CD14-positive monocyte (primary cell): ENCODE measurements at regions of chr11 and their contacts with region 1.

Region 1: GRCh38 chr11:111777094-111778046 is 11.2 kb upstream of the PPP2R1B start:
- DNase-seq: peak; percentile 38 to 66 (median 60)
- H3K4me3 ChIP-seq: no peak overlapping the region
- H3K4me3 Mint-ChIP-seq: no peak overlapping the region
- H3K27ac ChIP-seq: no peak overlapping the region
- H3K27ac Mint-ChIP-seq: no peak overlapping the region
- H3K4me1 ChIP-seq: no peaks in the 10 kb centered on the region
- H3K4me1 Mint-ChIP-seq: no peaks in the 10 kb centered on the region
- H3K27me3 ChIP-seq: no peaks in the 10 kb centered on the region
- H3K27me3 Mint-ChIP-seq: no peaks in the 10 kb centered on the region
- CTCF ChIP-seq: peak; percentile 73

Region 2: GRCh38 chr11:111586388-111586831 is 191.0 kb before region 1 on chr11:
- intact Hi-C with region 1: loop called in 1 of 2 experiments (anchors 5 kb)
- DNase-seq: peak in 2 of 3 donors; percentile 41 to 49
- H3K4me3 ChIP-seq: no peak overlapping the region
- H3K4me3 Mint-ChIP-seq: no peak overlapping the region
- H3K27ac ChIP-seq: no peak overlapping the region
- H3K27ac Mint-ChIP-seq: peak overlapping the region in 1 of 7 donors; percentile 31
- H3K4me1 ChIP-seq: no peaks in the 10 kb centered on the region
- H3K4me1 Mint-ChIP-seq: peaks cover 9% of the 10 kb centered on the region
- H3K27me3 ChIP-seq: no peaks in the 10 kb centered on the region
- H3K27me3 Mint-ChIP-seq: peaks cover 0 to 2% (median 0%) of the 10 kb centered on the region in 3 donors
- CTCF ChIP-seq: peak; percentile 68

Region 3: GRCh38 chr11:111601979-111602864 is 175.1 kb before region 1 on chr11 and contains the start of gene SIK2:
- intact Hi-C with region 1: loop called (anchors 5 kb)
- DNase-seq: peak; percentile 85 to 94 (median 90)
- H3K4me3 ChIP-seq: peak within 1 kb of the TSS; percentile 71 to 98 (median 81)
- H3K4me3 Mint-ChIP-seq: peak within 1 kb of the TSS; percentile 94 to 97
- H3K27ac ChIP-seq: peak within 1 kb of the TSS; percentile 88 to 94
- H3K27ac Mint-ChIP-seq: peak within 1 kb of the TSS; percentile 92 to 96 (median 95)
- H3K4me1 ChIP-seq: peaks cover 17 to 26% of the 10 kb centered on the region in 2 donors
- H3K4me1 Mint-ChIP-seq: peaks cover 29% of the 10 kb centered on the region
- H3K27me3 ChIP-seq: no peaks in the 10 kb centered on the region
- H3K27me3 Mint-ChIP-seq: peaks cover 0 to 1% (median 0%) of the 10 kb centered on the region in 3 donors
- CTCF ChIP-seq: peak; percentile 81
- polyA plus RNA-seq, gene SIK2: 0.16 to 8.8 (median 0.23) TPM